Activated T-helper 2 cell treated with anti-CD3 and anti-CD28 coated beads, Interferon-gamma antibody, Interleukin-2, Interleukin-4, amounts not matched to agents 10 μg/mL and 5 μg/mL and 100 μg/mL, durations not matched to agents 14 hours and 24 hours and 36 hours (primary cell): ENCODE measurements at regions of chr6 and their contacts with region 1.

Region 1: DNA sequence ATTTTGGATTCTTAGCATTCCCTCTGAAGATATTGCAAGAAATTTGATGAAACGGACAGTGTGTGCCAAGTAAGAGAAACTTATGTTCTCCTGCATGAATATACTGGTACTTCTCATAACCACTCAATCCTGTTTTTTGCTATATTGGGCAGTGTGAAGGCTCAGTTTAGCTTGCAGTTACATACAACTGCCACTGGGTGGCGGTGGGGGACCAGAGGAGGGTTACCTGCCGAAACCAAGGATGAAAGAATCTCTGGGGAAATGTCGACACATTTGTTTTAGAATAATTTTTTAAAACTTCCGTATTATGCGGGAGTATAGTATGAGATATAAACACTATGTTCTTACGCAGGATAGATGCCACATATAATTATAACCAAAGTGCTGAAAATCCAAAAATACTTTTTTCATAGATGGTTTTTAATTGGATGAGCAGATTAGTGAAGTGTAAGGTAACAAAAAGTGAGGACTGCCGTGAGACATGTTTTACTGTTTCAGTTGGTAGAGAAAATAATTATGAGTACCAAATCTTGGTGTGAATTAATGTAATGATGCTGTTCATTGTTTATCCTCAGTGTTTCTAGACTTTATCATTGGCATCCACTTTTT is 9.7 kb downstream of the TRMT11 start:
- DNase-seq: peak; percentile 51
- H3K4me3 Mint-ChIP-seq: peak overlapping the region; percentile 58
- H3K27ac Mint-ChIP-seq: no peak overlapping the region
- H3K4me1 Mint-ChIP-seq: peaks cover 11% of the 10 kb centered on the region
- H3K27me3 Mint-ChIP-seq: no peaks in the 10 kb centered on the region

Region 2: DNA sequence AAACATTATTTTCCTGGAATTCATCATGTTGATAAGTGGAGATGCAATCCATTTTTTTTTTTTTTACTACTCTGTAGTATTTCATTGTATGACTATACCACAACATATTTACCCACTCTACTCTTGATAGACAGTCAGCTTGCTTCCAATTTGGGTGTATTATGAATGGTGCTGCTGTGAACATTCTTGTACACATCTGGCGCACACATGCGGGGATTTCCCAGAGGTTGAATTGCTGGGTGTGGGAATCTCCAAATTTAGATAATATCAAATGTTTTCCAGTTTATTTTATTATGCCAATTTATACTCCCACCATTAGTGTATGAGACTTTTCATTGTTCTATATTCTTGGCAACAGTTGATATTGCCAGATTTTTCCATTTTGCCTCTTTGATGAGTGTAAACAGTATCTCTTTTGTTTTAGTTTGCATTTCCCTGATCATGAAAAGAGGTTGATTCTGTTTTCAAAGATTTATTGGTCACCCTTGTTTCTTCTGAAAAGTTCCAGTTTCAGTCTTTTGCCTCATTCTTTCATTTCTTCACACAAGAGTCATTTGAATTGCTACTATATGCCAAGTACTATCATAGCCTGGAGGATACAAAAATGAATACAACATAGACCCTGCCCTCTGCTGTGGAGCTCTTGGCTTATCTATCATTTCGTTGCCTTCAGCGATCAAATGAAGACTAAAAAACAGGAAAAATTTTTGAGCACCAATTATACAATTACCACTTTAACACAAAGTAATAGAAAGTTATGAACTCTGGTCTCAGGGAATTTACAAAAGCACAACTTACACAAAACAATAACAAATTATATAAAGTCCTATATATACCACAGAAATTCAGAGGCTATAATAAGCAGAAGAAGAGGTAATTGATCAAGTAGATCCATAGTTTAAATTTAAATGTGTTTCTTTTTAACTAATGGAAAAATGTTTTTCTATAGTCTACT is 222.4 kb before region 1 on chr6:
- intact Hi-C with region 1: no loop called
- DNase-seq: no peak
- H3K4me3 Mint-ChIP-seq: no peak overlapping the region
- H3K27ac Mint-ChIP-seq: no peak overlapping the region
- H3K4me1 Mint-ChIP-seq: peaks cover 10% of the 10 kb centered on the region
- H3K27me3 Mint-ChIP-seq: peaks cover 38% of the 10 kb centered on the region

Region 3: DNA sequence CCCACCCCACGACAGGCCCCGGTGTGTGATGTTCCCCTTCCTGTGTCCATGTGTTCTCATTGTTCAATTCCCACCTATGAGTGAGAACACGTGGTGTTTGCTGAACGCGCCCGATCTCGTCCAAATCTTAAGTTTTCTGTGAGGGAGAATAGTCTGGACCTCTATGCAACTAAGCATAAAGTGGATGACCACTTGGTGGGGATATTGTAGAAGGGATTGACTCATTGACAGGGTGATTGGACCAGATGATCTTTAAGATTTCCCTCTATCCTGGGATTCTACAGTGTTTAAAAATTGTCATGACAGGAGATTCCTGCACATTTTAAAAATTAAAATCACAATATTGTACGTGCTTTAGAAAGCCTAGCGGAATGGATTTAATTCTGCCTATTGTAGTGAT is 131.6 kb after region 1 on chr6:
- intact Hi-C with region 1: no loop called
- DNase-seq: no peak
- H3K4me3 Mint-ChIP-seq: no peak overlapping the region
- H3K27ac Mint-ChIP-seq: no peak overlapping the region
- H3K4me1 Mint-ChIP-seq: no peaks in the 10 kb centered on the region
- H3K27me3 Mint-ChIP-seq: no peaks in the 10 kb centered on the region

Region 4: DNA sequence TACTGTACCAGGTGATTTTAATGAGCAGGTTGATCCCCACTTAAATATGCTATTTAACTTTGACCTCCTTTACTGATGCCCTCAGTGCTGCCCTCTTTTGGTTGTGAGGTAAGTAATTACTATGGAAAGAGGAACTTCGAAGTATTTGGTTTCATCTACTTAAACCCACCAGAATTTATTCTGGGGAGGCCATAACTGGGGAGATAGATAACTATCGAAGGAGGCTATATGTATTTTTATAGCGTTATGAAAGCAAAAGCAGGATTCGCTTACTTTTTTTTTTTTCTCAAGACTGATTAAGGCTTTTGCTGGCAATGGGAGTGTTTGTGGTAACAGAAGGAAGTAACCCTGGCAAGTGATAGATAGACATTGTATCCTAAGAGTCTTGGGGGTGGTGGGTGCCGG is 174.9 kb after region 1 on chr6:
- intact Hi-C with region 1: loop called (anchors 1 kb)
- DNase-seq: no peak
- H3K4me3 Mint-ChIP-seq: peak overlapping the region; percentile 10
- H3K27ac Mint-ChIP-seq: no peak overlapping the region
- H3K4me1 Mint-ChIP-seq: peaks cover 5% of the 10 kb centered on the region
- H3K27me3 Mint-ChIP-seq: peaks cover 5% of the 10 kb centered on the region

Region 5: DNA sequence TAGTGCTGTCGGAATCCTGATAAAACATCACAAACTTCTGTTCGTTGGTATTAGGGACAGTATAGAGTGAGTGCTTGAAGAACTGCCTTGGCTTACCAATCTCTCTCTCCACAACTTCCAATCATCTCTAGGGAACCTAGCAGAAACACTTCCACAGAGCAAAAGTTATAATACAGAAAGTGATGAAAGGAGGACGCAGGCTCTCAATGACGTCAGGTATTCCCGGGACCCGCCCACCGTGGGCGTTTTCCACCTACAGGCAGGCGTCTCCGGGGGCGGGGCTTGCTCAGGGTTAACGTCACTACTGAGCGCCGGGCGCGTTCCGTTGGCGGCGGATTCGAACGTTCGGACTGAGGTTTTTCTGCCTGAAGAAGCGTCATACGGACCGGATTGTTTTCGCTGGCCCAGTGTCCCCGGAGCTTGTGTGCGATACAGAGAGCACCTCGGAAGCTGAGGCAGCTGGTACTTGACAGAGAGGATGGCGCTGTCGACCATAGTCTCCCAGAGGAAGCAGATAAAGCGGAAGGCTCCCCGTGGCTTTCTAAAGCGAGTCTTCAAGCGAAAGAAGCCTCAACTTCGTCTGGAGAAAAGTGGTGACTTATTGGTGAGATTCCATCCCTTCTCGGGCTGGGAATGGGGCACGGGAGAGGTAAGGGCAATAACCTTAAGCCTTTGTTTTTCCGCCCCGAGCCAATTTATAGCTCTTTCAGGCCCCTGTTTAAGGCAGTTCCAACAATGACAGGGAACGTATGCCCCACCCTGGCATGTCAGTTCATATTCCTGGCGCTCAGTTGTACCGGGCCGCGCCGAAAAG is 343.9 kb after region 1 on chr6 and contains the start of gene CENPW:
- intact Hi-C with region 1: loop called (anchors 2 kb)
- DNase-seq: peak; percentile 93
- H3K4me3 Mint-ChIP-seq: no peak within 1 kb of the TSS
- H3K27ac Mint-ChIP-seq: no peak within 1 kb of the TSS
- H3K4me1 Mint-ChIP-seq: peaks cover 25% of the 10 kb centered on the region
- H3K27me3 Mint-ChIP-seq: no peaks in the 10 kb centered on the region
- total RNA-seq, gene CENPW: 54.7 and 54.8 TPM in 2 replicates

Region 6: GRCh38 chr6:126422912-126423311 is 426.8 kb after region 1 on chr6:
- intact Hi-C with region 1: loop called (anchors 10 kb)
- DNase-seq: no peak
- H3K4me3 Mint-ChIP-seq: no peak overlapping the region
- H3K27ac Mint-ChIP-seq: no peak overlapping the region
- H3K4me1 Mint-ChIP-seq: no peaks in the 10 kb centered on the region
- H3K27me3 Mint-ChIP-seq: peaks cover 2% of the 10 kb centered on the region

Region 7: DNA sequence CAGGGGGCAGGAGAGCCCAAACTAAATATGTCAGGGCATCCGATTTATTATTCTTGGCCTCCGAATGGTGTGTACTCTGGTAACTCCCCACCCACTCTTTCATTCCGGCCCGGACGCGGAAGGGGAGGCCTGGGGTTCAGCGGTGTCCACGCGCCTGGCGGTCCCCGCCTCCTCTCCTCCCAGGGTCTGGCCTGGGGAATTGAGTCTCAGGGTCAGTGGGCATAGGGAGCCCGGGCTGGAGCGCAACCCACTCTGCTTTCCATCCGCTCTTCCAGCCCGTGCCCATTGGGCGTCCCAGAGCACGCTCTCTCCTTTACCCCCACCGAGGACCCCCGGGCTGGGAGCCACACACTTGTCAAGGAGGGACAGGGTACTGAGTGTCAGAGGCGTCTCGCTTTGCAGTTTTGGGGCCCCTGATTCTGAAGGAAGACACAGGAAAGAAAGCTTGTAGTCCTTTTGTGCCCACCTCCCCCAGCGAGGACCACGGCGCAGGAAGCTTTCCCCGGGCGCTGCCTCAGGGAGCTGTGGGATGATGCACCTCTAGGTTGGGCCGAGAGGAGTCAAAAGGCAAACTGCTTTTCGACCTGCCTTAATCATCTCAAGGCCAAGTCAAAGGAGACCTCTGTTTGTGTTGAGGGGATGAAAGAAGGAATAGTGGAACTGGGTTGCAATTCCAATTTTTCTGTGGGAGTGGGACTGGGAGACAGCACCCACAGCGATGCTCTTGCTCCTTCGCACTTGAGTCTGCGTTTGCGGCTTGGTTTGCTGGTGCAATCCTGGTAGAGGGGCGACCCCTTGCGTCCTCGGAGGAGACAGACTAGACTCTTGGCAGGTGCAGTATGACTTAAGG is 1124.9 kb after region 1 on chr6:
- intact Hi-C with region 1: loop called (anchors 5 kb)
- DNase-seq: peak; percentile 55
- H3K4me3 Mint-ChIP-seq: no peak overlapping the region
- H3K27ac Mint-ChIP-seq: no peak overlapping the region
- H3K4me1 Mint-ChIP-seq: peaks cover 15% of the 10 kb centered on the region
- H3K27me3 Mint-ChIP-seq: peaks cover 59% of the 10 kb centered on the region